ENCODE measurements at regions of chr15 and their contacts with region 1.

Region 1: DNA sequence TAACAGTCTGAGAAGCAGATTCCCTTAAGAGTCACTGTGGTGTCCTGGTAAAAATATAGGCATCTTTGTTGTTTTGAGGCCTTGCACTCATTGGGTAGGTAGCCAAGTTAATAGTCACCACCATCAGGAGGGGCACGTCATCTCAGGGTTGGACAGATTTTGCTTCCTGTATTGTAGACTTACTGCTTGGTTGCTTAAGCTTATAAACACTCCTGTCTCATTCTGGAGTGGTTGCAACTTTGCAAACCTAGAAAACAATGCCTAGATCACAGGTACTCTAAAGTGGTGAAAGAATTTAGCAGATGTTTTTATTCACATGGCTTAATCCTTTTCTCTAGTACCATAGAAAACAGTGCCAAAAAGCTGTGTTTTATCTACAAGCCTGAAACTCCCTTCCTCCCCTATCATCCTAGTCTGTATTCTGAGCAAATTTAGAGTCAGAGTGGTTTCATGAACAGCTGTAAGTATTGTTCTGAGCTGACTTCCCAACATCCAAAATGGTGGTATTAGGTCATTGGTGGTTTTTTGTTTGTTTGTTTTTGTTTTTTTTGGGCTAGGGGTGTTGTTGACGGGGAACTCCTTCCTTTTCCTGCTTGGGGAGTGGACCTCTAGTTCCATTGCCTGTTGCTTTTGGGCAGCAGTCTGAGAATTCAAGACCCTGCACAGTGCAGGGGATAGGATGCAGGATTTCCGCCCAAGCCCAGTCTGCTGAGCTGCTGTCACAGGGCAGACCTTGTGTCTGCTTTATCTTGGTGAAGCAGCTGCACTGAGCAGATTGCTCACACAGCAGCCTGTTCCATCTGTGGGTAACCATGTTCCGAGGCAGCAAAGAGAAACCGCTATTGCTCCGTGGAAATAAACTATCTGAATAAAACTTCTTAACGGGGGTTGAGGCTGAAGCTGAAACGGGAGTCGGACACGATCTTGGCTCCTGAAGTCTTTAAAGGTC is 202.0 kb downstream of the AKAP13 start:
- DNase-seq: peak; percentile 74 to 83 (median 80)
- ATAC-seq: peak; percentile 53 to 76 (median 61)
- H3K4me3 ChIP-seq: peak overlapping the region; percentile 29 to 66 (median 53)
- H3K27ac ChIP-seq: peak overlapping the region; percentile 82 to 96 (median 88)
- H3K4me1 ChIP-seq: peaks cover 17 to 96% (median 78%) of the 10 kb centered on the region in 12 donors
- H3K27me3 ChIP-seq: no peaks in the 10 kb centered on the region
- CTCF ChIP-seq: no peak
- POLR2A ChIP-seq: peak in 1 of 2 donors; percentile 50

Region 2: DNA sequence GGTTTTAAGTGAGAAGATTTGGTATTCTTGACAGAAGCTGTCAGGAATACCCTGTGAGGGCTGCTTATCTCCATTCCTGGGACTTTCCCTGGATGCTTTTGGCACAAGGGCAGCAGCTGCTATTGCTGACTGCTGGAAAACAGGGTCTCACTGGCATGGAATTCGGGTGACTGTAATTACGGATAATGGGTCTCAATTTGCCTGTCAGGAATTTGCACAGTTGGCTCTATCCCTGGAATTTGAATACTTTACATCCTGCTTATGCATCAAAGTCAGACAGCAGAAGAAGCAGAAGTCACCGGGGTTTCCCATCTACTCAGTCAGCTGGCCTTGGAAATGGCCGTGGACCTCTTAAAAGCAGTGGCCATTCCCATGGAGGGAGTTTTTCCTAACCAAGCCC is 227.9 kb before region 1 on chr15:
- intact Hi-C with region 1: no loop called
- DNase-seq: peak in 1 of 5 donors; percentile 27
- ATAC-seq: peak in 1 of 4 donors; percentile 22
- H3K4me3 ChIP-seq: peak overlapping the region in 1 of 12 donors; percentile 23
- H3K27ac ChIP-seq: peak overlapping the region in 10 of 12 donors; percentile 25 to 94 (median 82)
- H3K4me1 ChIP-seq: peaks cover 0 to 37% (median 24%) of the 10 kb centered on the region in 12 donors
- H3K27me3 ChIP-seq: no peaks in the 10 kb centered on the region
- CTCF ChIP-seq: no peak
- POLR2A ChIP-seq: no peak

Region 3: GRCh38 chr15:85494048-85494793 is 88.2 kb before region 1 on chr15:
- intact Hi-C with region 1: loop called in 4 of 10 experiments (anchors 2 to 10 kb)
- DNase-seq: no peak
- ATAC-seq: peak; percentile 55 to 86 (median 84)
- H3K4me3 ChIP-seq: no peak overlapping the region
- H3K27ac ChIP-seq: peak overlapping the region in 11 of 12 donors; percentile 8 to 76 (median 60)
- H3K4me1 ChIP-seq: peaks cover 12 to 93% (median 69%) of the 10 kb centered on the region in 12 donors
- H3K27me3 ChIP-seq: no peaks in the 10 kb centered on the region
- CTCF ChIP-seq: no peak
- POLR2A ChIP-seq: no peak

Region 4: GRCh38 chr15:85504749-85505676 is 77.4 kb before region 1 on chr15:
- intact Hi-C with region 1: loop called in 2 of 10 experiments (anchors 5 kb)
- DNase-seq: peak in 2 of 5 donors; percentile 39 to 62
- ATAC-seq: peak in 3 of 4 donors; percentile 50 to 66 (median 58)
- H3K4me3 ChIP-seq: no peak overlapping the region
- H3K27ac ChIP-seq: peak overlapping the region in 10 of 12 donors; percentile 29 to 83 (median 64)
- H3K4me1 ChIP-seq: peaks cover 2 to 91% (median 48%) of the 10 kb centered on the region in 12 donors
- H3K27me3 ChIP-seq: no peaks in the 10 kb centered on the region
- CTCF ChIP-seq: peak; percentile 29 to 79 (median 62)
- POLR2A ChIP-seq: no peak

Region 5: GRCh38 chr15:85527895-85528294 is 54.5 kb before region 1 on chr15:
- intact Hi-C with region 1: no loop called
- DNase-seq: peak in 2 of 5 donors; percentile 54 to 62
- ATAC-seq: peak; percentile 30 to 82 (median 75)
- H3K4me3 ChIP-seq: peak overlapping the region in 1 of 12 donors; percentile 5
- H3K27ac ChIP-seq: peak overlapping the region in 11 of 12 donors; percentile 40 to 85 (median 60)
- H3K4me1 ChIP-seq: peaks cover 7 to 84% (median 65%) of the 10 kb centered on the region in 12 donors
- H3K27me3 ChIP-seq: no peaks in the 10 kb centered on the region
- CTCF ChIP-seq: no peak
- POLR2A ChIP-seq: no peak

Region 6: GRCh38 chr15:85625856-85626255 is 43.5 kb after region 1 on chr15:
- intact Hi-C with region 1: loop called in 2 of 10 experiments (anchors 5 kb)
- DNase-seq: no peak
- ATAC-seq: peak in 3 of 4 donors; percentile 12 to 46 (median 36)
- H3K4me3 ChIP-seq: no peak overlapping the region
- H3K27ac ChIP-seq: peak overlapping the region; percentile 31 to 91 (median 82)
- H3K4me1 ChIP-seq: peaks cover 16 to 98% (median 84%) of the 10 kb centered on the region in 12 donors
- H3K27me3 ChIP-seq: no peaks in the 10 kb centered on the region
- CTCF ChIP-seq: no peak
- POLR2A ChIP-seq: no peak

Region 7: DNA sequence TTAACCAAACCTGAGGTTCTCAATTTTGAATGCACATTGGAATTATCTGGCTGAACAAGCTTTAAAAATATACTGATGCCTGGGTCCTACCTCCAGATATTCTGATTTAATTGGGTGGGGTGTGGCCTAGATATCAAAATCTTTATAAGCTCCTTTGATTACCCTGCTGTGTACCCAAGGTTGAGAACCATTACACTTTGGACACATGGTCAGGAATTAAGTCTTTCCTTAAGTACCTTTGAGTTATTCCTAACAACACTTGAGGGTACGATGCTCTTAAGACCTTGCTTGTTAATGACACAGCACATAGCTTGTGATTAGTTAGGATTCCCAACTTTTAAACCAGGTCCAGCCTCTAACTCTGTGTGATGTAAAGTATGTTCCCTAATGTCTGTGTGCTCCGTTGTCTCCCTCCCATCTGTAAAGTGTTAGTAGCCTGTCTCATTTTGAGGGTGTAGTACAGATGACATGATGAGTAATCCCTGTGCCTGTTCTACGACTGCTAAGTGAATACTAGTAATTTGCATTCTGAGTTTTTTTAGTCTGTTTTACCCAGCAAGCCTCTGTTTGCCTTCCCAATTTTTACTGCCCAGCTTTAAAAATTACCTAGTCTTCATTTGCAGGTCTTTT is 57.5 kb after region 1 on chr15:
- intact Hi-C with region 1: no loop called
- DNase-seq: no peak
- ATAC-seq: peak in 3 of 4 donors; percentile 6 to 61 (median 57)
- H3K4me3 ChIP-seq: no peak overlapping the region
- H3K27ac ChIP-seq: peak overlapping the region in 8 of 12 donors; percentile 1 to 45 (median 28)
- H3K4me1 ChIP-seq: peaks cover 0 to 88% (median 52%) of the 10 kb centered on the region in 12 donors
- H3K27me3 ChIP-seq: no peaks in the 10 kb centered on the region
- CTCF ChIP-seq: no peak
- POLR2A ChIP-seq: no peak